Ovary (tissue), 10 donors: ENCODE measurements at regions of chr11 and their contacts with region 1.

Region 1: DNA sequence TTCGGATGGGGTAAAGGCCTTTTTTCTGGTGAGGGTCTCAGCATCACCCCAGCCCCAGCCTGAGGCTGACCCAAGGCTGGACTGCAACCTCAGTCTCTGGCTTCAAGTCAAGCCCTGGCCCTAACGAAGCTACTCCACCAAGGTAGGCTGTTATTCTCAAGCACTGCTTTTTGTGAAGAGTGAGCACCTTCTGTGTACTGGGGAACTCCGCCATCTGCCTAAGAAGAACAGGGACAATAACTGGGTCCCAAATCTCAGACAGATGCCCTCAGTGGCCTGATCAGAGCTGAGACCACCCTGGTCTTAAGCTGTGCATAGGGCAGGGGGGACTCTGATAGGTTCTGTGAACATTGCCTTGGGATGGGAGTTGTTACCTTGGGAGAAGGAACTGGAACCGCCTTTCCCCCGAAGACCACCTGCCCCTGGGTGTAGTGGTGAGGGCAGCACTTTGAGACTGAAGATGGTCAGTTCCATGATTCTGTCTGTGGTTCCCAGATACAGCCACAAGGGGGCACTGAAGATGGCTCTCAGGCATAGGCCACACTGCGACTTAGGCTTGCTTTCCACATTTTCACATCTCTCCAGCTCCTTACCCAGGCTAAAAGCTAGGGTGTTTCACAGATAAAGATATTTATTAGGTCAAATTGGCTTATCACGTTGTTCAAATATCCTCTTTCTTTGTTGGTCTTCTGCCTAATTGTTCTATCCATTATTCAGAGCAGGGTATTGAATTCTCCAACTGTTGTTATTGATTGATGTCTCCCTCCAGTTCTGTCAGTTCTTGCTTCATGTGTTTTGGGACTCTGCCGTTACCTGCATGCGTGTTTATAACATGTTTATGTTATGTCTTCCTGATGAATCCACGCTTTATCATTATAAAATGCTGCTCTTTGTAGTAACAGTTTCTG is 11.8 kb upstream of the UVRAG start:
- DNase-seq: peak; percentile 52 to 82 (median 68)
- H3K4me3 ChIP-seq: no peak overlapping the region
- H3K27ac ChIP-seq: no peak overlapping the region
- H3K4me1 ChIP-seq: no peaks in the 10 kb centered on the region
- H3K27me3 ChIP-seq: no peaks in the 10 kb centered on the region
- CTCF ChIP-seq: peak; percentile 58 to 74 (median 69)
- EP300 ChIP-seq: no peak
- POLR2A ChIP-seq: no peak

Region 2: GRCh38 chr11:75867775-75868374 is 64.7 kb after region 1 on chr11:
- intact Hi-C with region 1: loop called in 2 of 4 experiments (anchors 1 to 5 kb)
- DNase-seq: peak in 1 of 5 donors; percentile 50
- H3K4me3 ChIP-seq: no peak overlapping the region
- H3K27ac ChIP-seq: no peak overlapping the region
- H3K4me1 ChIP-seq: no peaks in the 10 kb centered on the region
- H3K27me3 ChIP-seq: no peaks in the 10 kb centered on the region
- CTCF ChIP-seq: peak in 2 of 3 donors; percentile 67 to 71
- EP300 ChIP-seq: no peak
- POLR2A ChIP-seq: no peak

Region 3: DNA sequence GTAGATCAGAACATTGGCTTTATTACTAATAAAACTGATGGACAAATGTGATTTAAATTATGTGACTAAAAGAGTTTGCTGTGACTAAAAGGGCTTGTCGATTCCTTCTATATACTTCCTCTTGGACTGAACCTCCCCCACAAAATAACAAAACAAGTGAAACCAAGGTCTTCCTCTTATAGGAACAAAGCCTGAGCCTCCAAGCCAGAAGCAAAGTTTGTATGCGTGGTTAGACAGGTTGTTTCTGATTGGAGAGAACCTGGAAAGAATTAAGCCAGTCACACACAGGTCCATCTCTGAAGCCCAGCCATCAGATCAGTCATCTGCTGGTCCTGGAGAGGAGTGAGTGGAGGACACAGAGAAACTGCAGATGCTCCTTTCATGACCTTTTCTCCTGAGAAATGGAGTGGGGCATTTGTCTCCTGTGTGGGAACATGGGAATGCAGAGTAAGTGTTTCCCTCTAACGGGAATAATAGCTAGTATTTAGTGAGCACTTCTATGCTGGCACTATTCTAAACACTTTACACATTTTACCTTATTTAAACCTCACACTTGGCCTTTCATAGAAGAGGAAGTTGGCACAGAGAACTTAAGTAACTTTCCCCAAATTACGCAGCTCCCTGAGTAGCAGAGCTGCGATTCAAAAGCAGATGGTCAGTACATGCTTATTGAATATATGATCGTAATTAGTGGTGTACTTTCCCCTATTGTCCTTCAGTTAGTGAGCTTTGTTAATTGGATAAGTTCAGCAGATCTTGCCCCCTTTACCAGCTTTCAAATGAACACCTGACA is 89.0 kb after region 1 on chr11:
- intact Hi-C with region 1: no loop called
- DNase-seq: no peak
- H3K4me3 ChIP-seq: no peak overlapping the region
- H3K27ac ChIP-seq: no peak overlapping the region
- H3K4me1 ChIP-seq: no peaks in the 10 kb centered on the region
- H3K27me3 ChIP-seq: no peaks in the 10 kb centered on the region
- CTCF ChIP-seq: no peak
- EP300 ChIP-seq: no peak
- POLR2A ChIP-seq: no peak

Region 4: GRCh38 chr11:76152086-76152681 is 349.0 kb after region 1 on chr11:
- intact Hi-C with region 1: loop called in 1 of 4 experiments (anchors 10 kb)
- DNase-seq: peak; percentile 80 to 89 (median 87)
- H3K4me3 ChIP-seq: peak overlapping the region; percentile 43
- H3K27ac ChIP-seq: no peak overlapping the region
- H3K4me1 ChIP-seq: peaks cover 2% of the 10 kb centered on the region
- H3K27me3 ChIP-seq: no peaks in the 10 kb centered on the region
- CTCF ChIP-seq: peak; percentile 84 to 94 (median 91)
- EP300 ChIP-seq: no peak
- POLR2A ChIP-seq: no peak

Region 5: GRCh38 chr11:76266270-76267090 is 463.3 kb after region 1 on chr11:
- intact Hi-C with region 1: no loop called
- DNase-seq: no peak
- H3K4me3 ChIP-seq: no peak overlapping the region
- H3K27ac ChIP-seq: no peak overlapping the region
- H3K4me1 ChIP-seq: no peaks in the 10 kb centered on the region
- H3K27me3 ChIP-seq: no peaks in the 10 kb centered on the region
- CTCF ChIP-seq: no peak
- EP300 ChIP-seq: no peak
- POLR2A ChIP-seq: no peak

Region 6: GRCh38 chr11:76318744-76319384 is 515.7 kb after region 1 on chr11:
- intact Hi-C with region 1: loop called in 3 of 4 experiments (anchors 5 to 10 kb)
- DNase-seq: peak; percentile 72 to 85 (median 79)
- H3K4me3 ChIP-seq: no peak overlapping the region
- H3K27ac ChIP-seq: no peak overlapping the region
- H3K4me1 ChIP-seq: peaks cover 1% of the 10 kb centered on the region
- H3K27me3 ChIP-seq: no peaks in the 10 kb centered on the region
- CTCF ChIP-seq: peak; percentile 79 to 86 (median 85)
- EP300 ChIP-seq: no peak
- POLR2A ChIP-seq: no peak